Dendritic cell treated with granulocyte-macrophage colony-stimulating factor and Interleukin-4, amounts not matched to agents 40 ng/mL and 50 ng/mL, for 4 days (primary cell): ENCODE measurements at regions of chr9 and their contacts with region 1.

Region 1: GRCh38 chr9:127698985-127699670 is 7.7 kb upstream of the CFAP157 start:
- H3K4me3 Mint-ChIP-seq: peak overlapping the region; percentile 63
- H3K27ac Mint-ChIP-seq: peak overlapping the region; percentile 96
- H3K4me1 Mint-ChIP-seq: peaks cover 26% of the 10 kb centered on the region
- H3K27me3 Mint-ChIP-seq: peaks cover 3% of the 10 kb centered on the region

Region 2: GRCh38 chr9:127715394-127716337 is 16.5 kb after region 1 on chr9 and contains the starts of genes PTRH1 and TTC16:
- intact Hi-C with region 1: loop called (anchors 1 kb)
- H3K4me3 Mint-ChIP-seq: peak within 1 kb of the TSS; percentile 98
- H3K27ac Mint-ChIP-seq: peak within 1 kb of the TSS; percentile 90
- H3K4me1 Mint-ChIP-seq: peaks cover 42% of the 10 kb centered on the region
- H3K27me3 Mint-ChIP-seq: peaks cover 13% of the 10 kb centered on the region